Activated CD8-positive, alpha-beta T cell treated with anti-CD3 and anti-CD28 coated beads for 36 hours (primary cell): ENCODE measurements at regions of chr7 and their contacts with region 1.

Region 1: GRCh38 chr7:21054427-21055112 is 267.9 kb upstream of the SP8 start:
- DNase-seq: no peak
- ATAC-seq: no peak
- H3K4me3 Mint-ChIP-seq: no peak overlapping the region
- H3K27ac Mint-ChIP-seq: no peak overlapping the region
- H3K4me1 Mint-ChIP-seq: no peaks in the 10 kb centered on the region
- H3K27me3 Mint-ChIP-seq: no peaks in the 10 kb centered on the region
- CTCF ChIP-seq: no peak

Region 2: DNA sequence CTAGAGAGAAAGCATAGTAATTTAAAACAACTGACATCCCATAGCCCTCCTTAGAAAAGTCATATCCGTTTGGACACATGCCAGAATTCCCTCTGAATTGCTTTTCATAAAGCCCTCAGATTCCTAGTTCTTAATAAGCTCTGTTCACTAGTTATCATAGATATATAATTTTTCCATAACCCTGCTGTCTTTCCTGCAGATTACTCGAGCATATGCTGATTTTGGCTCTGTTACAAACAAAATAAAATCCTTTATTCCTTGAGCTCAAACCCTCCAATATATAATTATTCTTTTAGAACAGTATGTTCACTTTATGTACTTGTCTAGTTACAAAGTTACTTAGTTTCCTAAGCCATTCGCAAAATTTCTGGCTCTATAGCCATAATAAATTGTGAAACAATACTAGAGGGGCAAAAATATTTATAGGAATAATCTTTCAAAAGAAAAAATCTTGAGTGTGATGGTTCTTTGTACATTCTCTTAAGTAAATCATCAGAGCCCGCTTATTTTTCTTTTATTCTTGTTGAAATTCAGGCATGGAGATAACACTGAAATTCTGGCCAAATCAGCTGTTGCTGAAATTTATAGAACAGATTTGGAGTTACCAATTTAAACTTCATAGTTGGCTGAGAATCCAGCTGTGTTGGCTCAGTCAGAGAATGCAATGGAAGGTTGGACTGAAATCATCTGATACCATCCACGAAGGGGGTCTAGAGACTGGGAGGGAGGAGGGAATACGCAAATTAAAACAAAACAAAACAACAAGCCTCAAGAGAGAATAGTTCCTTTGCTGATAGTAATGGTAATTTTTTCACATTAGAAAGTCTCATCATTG is 1135.1 kb before region 1 on chr7:
- CTCF ChIA-PET with region 1: no interaction called
- POLR2A ChIA-PET with region 1: no interaction called
- intact Hi-C with region 1: loop called (anchors 10 kb)
- DNase-seq: no peak
- ATAC-seq: no peak
- H3K4me3 Mint-ChIP-seq: no peak overlapping the region
- H3K27ac Mint-ChIP-seq: no peak overlapping the region
- H3K4me1 Mint-ChIP-seq: no peaks in the 10 kb centered on the region
- H3K27me3 Mint-ChIP-seq: no peaks in the 10 kb centered on the region
- CTCF ChIP-seq: no peak

Region 3: GRCh38 chr7:21128062-21128817 is 73.7 kb after region 1 on chr7:
- CTCF ChIA-PET with region 1: no interaction called
- POLR2A ChIA-PET with region 1: no interaction called
- intact Hi-C with region 1: no loop called
- DNase-seq: no peak
- ATAC-seq: no peak
- H3K4me3 Mint-ChIP-seq: no peak overlapping the region
- H3K27ac Mint-ChIP-seq: no peak overlapping the region
- H3K4me1 Mint-ChIP-seq: peaks cover 4% of the 10 kb centered on the region
- H3K27me3 Mint-ChIP-seq: peaks cover 19% of the 10 kb centered on the region
- CTCF ChIP-seq: no peak

Region 4: DNA sequence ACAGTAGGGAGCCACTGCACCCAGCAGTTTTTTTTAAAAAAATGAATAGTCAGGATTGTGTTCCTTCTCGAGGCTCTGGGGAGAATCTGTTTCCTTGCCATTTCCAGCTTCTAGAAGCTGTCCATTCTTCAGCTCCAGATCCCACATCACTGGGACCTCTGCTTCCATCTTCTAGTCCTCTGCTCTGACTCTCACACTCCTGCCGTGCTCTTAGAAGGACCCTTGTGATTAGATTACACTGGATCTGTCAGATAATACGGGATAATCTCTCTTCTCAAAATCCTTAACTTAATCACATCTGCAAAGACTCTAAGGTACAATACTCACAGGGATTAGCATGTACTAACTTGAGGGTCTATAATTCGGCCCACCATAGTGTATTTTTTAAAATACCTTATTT is 214.5 kb after region 1 on chr7:
- CTCF ChIA-PET with region 1: no interaction called
- POLR2A ChIA-PET with region 1: no interaction called
- intact Hi-C with region 1: no loop called
- DNase-seq: no peak
- ATAC-seq: no peak
- H3K4me3 Mint-ChIP-seq: no peak overlapping the region
- H3K27ac Mint-ChIP-seq: no peak overlapping the region
- H3K4me1 Mint-ChIP-seq: no peaks in the 10 kb centered on the region
- H3K27me3 Mint-ChIP-seq: no peaks in the 10 kb centered on the region
- CTCF ChIP-seq: no peak

Region 5: DNA sequence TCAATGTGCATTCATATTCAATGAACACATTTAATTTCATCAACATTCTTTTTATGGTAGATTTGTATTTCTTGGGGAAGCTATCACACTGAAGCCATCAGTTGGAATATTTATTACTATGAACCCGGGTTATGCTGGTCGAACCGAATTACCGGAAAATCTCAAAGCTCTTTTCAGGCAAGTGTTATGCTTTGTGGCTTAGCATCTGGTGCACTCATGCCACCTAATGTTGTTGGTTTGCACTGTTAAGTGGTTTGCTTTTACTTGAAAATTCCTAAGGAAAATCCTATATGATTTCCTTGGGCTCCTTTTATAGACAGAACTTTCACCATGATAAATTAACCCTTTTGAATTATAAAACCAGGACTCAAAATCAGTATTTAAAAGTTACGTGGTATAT is 636.1 kb after region 1 on chr7:
- CTCF ChIA-PET with region 1: no interaction called
- POLR2A ChIA-PET with region 1: no interaction called
- intact Hi-C with region 1: loop called (anchors 10 kb)
- DNase-seq: no peak
- ATAC-seq: no peak
- H3K4me3 Mint-ChIP-seq: no peak overlapping the region
- H3K27ac Mint-ChIP-seq: no peak overlapping the region
- H3K4me1 Mint-ChIP-seq: no peaks in the 10 kb centered on the region
- H3K27me3 Mint-ChIP-seq: peaks cover 4% of the 10 kb centered on the region
- CTCF ChIP-seq: no peak